ENCODE measurements at regions of chr4 and their contacts with region 1.

Region 1: DNA sequence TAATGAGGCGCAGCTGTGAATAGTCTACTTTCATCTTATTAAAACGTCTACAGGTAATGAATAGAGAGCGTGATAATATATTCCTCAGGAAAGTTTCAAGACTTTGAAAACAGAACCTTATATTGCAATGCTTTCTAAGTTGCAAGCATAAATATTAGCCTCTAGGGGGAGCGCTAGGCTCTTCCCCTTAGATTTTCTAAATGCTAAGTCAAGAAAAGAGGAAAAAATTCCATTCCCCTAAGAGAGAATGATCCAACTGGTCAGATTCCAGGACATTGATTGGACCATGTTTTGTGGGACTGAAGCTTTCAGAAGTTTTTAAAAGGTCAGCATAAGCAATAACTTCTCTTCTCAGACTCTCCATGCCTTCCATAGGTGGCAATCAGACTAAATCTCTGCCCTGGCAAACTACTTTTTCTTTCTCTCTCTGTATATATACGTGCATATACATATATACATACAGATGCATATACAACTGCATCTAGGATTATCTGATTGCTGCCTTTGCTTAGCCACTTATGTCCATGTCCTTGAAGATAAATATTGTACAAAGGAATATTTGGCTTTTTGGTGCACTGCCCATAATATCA is 492.9 kb downstream of the INPP4B start:
- DNase-seq: peak; percentile 38
- H3K4me3 ChIP-seq: no peak overlapping the region
- H3K27ac ChIP-seq: no peak overlapping the region
- H3K27me3 ChIP-seq: no peaks in the 10 kb centered on the region
- CTCF ChIP-seq: peak; percentile 88

Region 2: DNA sequence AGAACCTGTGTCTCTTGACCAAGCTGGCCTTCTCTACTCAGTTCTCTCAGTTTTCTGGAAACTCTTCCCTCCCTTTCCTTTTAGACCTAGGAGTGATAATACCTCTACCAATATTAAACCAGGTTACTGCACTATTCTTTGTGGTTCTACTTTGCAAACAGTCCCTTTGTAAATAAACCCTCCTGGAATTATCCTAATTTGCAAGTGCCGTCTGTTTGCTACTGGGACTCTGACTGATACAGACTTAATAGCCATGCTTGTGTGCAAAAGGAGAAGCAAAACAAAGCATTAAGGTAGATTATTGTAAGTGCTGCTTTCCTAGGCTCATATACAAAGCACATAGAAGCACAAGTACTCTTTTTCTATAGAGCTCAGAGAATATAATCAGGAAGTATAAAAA is 14.2 kb before region 1 on chr4:
- CTCF ChIA-PET with region 1: interaction called, 29 read pairs
- POLR2A ChIA-PET with region 1: no interaction called
- DNase-seq: no peak
- H3K4me3 ChIP-seq: no peak overlapping the region
- H3K27ac ChIP-seq: no peak overlapping the region
- H3K27me3 ChIP-seq: no peaks in the 10 kb centered on the region
- CTCF ChIP-seq: no peak

Region 3: DNA sequence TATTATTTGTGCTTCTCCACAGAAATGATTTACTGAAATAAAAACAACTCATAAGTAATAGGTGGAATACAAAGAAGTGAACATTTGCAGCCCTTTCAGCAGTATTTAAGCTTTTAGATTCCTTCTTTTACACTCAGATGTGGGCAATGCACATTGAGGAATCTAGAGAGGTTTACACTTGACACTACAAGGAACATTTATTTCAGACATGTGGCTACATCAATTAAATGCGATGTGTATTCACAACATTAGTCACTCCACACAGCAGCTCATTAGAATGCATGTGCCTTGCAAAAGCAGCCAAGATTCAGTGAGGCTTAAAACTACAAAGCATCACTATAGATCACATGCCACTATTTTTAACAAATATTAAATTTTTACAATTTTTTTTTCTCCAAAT is 12.1 kb after region 1 on chr4:
- CTCF ChIA-PET with region 1: interaction called, 14 read pairs
- POLR2A ChIA-PET with region 1: no interaction called
- DNase-seq: no peak
- H3K4me3 ChIP-seq: no peak overlapping the region
- H3K27ac ChIP-seq: no peak overlapping the region
- H3K27me3 ChIP-seq: no peaks in the 10 kb centered on the region
- CTCF ChIP-seq: no peak

Region 4: DNA sequence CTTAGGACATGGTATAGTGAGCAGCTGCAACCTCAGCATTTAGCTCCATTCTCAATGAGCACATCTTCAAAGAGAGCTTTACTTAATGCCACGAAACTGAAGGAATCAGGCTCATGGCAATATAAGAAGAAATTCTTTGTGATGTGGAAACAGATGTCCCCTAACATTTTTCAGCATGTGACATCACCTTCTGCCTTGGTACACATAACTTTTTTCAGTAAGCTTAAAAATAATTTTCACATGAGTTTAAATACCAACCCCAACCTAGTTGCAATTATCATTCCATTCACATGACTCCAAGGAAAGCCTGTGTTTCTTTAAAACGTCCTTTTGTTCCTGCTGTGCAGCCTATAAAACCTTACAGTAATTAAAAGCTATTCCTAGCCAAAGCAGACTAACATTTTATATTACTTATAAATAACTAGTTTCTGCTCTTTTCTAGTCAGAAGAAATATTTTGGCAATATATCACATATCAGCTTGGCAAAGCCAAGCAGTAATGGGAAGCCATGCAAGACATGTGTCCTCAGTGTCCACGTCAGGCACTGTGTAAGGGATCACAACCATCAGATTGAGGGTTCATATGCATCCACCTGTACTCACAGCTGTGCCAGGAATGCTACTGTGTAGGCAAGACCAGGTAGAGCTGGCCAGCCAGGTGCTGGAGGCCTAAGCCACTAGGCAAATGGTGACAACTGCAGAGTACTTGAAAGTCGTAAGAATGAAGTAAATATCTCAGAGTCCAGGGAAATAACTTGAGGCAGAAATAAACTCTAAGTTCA is 26.2 kb after region 1 on chr4:
- CTCF ChIA-PET with region 1: interaction called, 26 read pairs
- POLR2A ChIA-PET with region 1: no interaction called
- DNase-seq: peak; percentile 66
- H3K4me3 ChIP-seq: no peak overlapping the region
- H3K27ac ChIP-seq: peak overlapping the region; percentile 80
- H3K27me3 ChIP-seq: no peaks in the 10 kb centered on the region
- CTCF ChIP-seq: no peak

Region 5: DNA sequence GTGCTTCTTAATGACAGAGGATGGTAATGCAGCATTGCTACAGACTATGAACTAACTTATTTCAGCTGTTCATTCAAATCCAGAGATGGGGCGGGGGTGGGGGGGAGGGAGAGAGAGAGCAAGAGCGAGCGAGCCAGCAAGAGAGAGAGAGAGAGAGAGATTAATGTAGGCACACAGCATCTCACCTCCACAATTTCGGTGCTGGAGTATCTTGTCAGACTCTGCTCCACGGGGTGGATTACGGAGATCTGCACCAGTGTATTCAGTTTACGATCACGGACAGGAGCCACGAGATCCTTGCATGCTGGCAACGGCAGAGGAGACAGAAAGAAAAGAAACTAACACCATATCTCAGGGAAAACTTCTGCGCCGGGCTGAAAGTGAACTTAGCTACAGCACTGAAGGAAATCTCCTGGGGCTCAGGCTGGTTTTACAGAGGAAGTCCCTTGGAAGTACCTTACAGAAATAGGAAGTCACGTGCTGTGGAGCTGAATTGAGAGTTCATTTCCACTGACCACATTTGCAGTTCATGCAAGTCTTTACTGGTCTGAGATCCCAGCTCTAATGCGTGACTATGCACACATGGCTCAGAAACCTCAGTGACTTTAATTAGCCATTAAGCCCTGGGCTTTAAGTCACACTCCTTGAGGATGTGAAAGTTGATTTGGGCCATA is 51.9 kb after region 1 on chr4:
- CTCF ChIA-PET with region 1: interaction called, 14 read pairs
- POLR2A ChIA-PET with region 1: no interaction called
- DNase-seq: no peak
- H3K4me3 ChIP-seq: peak overlapping the region; percentile 66
- H3K27ac ChIP-seq: peak overlapping the region; percentile 78
- H3K27me3 ChIP-seq: no peaks in the 10 kb centered on the region
- CTCF ChIP-seq: no peak

Region 6: GRCh38 chr4:142719854-142720541 is 366.8 kb after region 1 on chr4:
- CTCF ChIA-PET with region 1: interaction called, 22 read pairs
- POLR2A ChIA-PET with region 1: no interaction called
- DNase-seq: no peak
- H3K4me3 ChIP-seq: no peak overlapping the region
- H3K27ac ChIP-seq: no peak overlapping the region
- H3K27me3 ChIP-seq: no peaks in the 10 kb centered on the region
- CTCF ChIP-seq: peak; percentile 61

Region 7: DNA sequence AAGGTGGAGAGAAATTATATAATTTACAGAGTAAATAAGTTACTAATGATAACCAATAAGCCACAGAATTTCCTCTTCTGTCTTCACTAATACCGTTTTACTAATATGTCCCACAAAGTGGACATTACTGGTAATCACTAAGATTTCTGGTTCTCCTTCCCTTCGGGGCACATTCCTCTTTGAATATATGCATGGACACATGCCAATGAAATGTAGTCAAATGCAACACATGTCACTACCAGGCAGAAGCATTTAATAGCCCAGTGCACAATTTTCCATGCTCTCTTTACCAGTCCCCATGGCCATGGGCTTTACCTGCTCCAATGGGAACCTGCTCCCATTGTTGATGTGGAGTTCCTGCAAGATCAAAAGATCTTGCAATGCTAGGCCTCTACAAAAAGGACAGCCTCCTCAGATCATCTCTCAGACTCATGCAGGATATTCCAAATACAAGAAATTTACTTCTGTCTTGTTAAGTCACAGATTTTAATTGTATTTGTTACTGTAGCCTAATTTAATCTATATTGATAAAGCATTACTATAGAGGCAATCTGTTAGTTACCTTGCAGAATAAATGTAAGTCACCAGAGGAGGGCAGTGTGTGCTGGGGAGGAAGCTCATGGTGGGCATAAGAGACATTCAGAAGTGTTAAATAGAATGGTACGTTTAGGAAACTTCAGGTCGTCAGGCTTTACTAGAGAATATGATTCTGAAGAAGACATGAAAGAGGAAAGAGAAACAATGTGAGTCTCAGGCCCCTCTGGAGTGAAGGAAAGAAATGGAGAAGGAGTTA is 530.0 kb after region 1 on chr4:
- CTCF ChIA-PET with region 1: no interaction called
- POLR2A ChIA-PET with region 1: no interaction called
- DNase-seq: no peak
- H3K4me3 ChIP-seq: no peak overlapping the region
- H3K27ac ChIP-seq: no peak overlapping the region
- H3K27me3 ChIP-seq: no peaks in the 10 kb centered on the region
- CTCF ChIP-seq: peak; percentile 44